ENCODE measurements at regions of chr12 and their contacts with region 1.

Region 1: DNA sequence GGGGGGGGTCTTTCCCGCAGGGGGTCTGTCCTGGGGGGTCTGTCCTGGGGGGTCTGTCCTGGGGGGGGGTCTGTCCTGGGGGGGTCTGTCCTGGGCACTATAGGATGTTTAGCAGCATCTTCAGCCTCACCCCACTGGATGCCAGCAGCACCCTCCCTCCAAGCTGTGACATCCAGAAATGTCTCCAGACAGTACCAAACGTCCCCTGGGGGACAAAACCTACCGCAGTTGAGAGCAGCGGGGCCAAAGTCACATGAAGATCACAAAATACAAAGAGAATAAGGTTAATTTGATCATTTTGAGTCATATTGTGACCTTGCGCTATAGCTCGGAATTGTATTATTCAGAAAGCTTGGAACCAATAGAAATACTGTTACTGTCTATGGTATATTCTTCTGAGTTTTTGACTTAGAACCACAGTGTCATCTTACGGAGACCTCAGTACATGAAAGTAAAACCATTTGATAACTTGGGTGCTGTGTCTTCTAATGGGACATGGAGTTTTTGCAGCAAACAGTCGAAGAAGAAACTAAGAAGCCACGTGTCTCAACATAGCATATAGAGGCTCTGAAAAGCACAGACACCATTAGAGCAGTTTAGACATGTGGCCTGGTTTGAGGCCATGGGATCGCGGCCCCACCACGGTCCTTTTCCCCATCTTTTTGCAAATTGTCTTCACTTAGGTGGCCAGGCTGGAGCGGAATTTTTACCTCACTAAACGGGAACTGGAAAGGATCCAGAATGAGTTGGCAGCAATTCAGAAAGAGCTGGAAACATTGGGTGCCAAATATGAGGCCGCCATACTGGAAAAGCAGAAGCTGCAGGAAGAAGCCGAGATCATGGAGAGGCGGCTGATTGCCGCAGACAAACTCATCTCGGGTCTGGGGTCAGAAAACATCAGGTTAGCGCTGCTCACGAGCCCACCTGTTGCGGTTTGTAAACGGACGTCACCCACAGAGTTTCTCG is 59.9 kb downstream of the CCDC92 start:
- DNase-seq: no peak
- ATAC-seq: no peak
- H3K4me3 ChIP-seq: no peak overlapping the region
- H3K27ac ChIP-seq: no peak overlapping the region
- H3K4me1 ChIP-seq: peaks cover 0 to 4% (median 0%) of the 10 kb centered on the region in 12 donors
- H3K27me3 ChIP-seq: peaks cover 0 to 7% (median 0%) of the 10 kb centered on the region in 9 donors
- CTCF ChIP-seq: no peak
- POLR2A ChIP-seq: no peak

Region 2: DNA sequence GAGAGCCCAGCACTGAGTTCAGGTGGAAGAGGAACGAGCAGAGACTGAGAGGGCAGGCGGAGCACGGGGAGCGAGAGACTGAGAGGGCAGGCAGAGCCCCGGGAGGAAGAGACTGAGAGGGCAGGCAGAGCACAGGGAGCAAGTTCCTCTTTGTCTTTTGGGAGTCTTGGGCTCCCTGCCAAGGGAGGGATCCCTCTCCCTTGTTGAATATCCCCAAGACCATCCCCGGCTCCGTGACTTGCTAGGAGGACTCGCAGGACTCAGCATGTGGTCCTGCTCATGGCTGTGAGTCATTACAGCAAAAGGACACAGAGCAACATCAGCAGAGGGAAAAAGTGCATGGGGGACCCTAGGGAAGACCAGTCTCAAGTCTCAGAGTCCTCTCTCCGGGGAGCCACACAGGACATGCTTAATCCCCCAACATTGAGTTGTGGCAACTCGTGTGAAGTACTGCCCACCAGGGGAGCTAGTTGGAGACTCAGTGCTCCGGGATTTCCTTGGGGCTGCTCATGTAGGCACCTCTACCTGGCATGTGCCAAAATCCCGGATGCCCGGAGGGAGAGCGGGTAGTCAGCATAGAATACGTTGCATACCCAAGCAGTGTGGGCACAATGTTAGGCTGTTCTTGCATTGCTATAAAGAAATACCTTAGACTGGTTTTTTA is 21.1 kb before region 1 on chr12:
- intact Hi-C with region 1: loop called in 1 of 10 experiments (anchors 1 kb)
- DNase-seq: no peak
- ATAC-seq: no peak
- H3K4me3 ChIP-seq: no peak overlapping the region
- H3K27ac ChIP-seq: no peak overlapping the region
- H3K4me1 ChIP-seq: no peaks in the 10 kb centered on the region
- H3K27me3 ChIP-seq: peaks cover 0 to 45% (median 6%) of the 10 kb centered on the region in 9 donors
- CTCF ChIP-seq: no peak
- POLR2A ChIP-seq: no peak

Measured in heart left ventricle (tissue), 16 donors.